ENCODE measurements at regions of chr6 and their contacts with region 1.

Region 1: DNA sequence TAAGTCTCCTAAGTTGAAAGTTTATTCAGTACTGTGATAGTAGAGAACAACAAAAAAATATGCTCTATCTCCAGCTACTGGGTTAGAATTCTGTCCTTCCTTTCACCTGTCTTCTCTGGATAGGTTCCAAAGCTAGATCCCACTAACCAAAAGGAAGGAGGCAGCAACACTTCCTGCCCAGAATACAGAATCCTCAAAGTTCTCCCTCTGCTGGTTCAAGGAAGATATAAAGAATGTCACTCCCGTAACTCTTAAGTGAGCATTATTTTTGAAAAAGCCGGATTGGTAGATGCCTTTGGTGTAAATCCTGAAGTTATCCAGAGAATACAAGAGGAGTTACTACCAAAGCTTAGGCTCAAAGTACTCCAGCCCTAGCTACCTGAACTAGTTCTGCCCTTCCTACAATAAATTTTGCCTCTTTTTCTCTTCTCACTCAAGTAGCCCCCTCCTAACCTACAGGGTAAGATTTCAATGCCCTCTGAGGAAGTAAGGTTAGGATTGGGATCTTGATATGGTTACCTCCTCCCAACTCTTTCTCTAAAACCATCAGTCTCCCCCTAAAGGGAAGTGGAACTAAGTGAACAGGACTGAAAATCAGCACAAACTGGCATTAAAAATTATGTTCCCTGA is 26.0 kb upstream of the CRIP3 start:
- DNase-seq: peak; percentile 72
- H3K4me3 Mint-ChIP-seq: no peak overlapping the region
- H3K27ac Mint-ChIP-seq: no peak overlapping the region
- H3K4me1 Mint-ChIP-seq: no peaks in the 10 kb centered on the region
- H3K27me3 Mint-ChIP-seq: no peaks in the 10 kb centered on the region
- CTCF ChIP-seq: peak; percentile 44

Region 2: DNA sequence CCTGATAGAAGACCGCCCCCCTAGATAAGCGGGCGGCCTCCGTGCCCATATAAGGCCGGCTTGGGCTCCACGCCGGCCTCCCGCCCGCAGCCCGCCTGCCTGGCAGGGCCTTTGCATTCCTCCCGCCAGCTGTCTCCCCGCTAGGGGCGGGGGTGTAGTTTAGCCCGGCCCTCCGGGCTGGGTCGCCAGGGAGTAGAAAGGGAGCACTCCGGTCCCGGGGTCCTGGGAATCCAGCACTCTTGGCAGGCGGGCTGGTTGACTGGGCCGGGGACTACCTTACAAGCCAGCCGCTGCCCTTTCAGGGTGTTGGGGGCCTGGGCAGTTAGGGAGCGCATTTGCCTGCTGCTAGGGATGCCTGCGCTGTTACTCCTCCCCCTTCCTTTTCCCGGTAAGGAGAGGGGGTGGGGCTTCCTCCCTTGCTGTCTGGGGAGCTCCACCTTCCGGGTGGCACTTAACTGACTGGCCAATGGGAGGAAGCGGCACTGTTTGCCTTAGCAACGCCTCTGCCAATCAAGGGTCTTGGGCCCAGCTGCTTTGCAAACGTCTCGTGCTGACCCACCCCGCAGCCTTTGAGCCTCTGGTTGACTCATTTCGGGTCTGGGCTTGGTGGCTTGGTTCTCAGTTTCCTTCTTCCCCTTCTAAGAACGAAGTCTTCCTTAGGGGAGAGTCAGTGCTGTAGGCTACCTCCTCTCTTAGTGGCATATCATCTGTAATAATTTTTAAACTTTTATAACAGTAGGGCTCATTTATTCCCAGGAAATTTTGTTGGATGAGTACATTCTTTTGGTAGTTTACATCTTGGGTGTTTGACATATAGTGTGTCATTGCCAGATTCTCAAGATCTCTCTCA is 160.1 kb before region 1 on chr6:
- CTCF ChIA-PET with region 1: no interaction called
- POLR2A ChIA-PET with region 1: no interaction called
- intact Hi-C with region 1: loop called (anchors 1 kb)
- DNase-seq: peak; percentile 99
- H3K4me3 Mint-ChIP-seq: peak overlapping the region; percentile 87
- H3K27ac Mint-ChIP-seq: peak overlapping the region; percentile 83
- H3K4me1 Mint-ChIP-seq: peaks cover 30% of the 10 kb centered on the region
- H3K27me3 Mint-ChIP-seq: no peaks in the 10 kb centered on the region
- CTCF ChIP-seq: no peak

Region 3: DNA sequence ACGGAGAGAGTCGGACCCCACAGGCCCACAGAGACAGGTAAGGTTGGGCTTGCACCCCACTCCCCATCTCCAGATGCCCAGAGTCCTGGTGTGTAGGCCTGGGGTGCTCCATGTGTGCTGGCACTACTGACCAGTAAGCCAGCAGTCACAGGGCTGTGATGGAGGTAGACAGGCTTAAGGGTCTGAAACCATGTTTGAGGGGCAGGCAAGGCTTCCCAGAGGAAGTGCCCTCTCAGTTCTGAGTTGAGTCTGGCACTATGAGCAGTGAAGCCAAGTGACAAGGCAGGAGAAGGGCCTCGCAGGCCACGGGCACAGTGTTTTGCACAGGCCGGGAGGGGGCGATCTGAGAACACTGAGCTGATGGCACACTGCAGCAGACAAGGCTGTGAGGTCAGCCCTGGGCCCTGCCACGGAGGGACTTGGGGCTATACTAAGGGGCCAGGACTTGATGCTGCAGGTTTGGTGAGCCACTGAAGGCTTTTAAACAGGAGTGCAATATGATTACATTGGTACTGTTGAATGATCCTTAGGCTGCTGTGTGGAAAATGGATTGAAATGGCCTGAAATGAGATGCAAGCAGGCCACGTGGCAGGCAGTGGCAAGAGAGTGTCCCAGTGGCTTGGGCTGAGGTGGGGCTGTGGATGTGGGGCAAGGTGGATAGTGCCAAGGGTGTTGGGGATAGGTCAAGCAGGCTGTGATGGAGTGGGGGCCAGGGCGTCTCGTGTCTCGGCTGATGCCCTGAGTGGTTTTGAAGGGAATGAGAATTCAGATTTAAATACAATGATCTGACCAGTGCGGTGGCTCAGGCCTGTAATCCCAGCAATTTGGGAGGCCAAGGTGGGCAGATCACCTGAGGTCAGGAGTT is 71.0 kb before region 1 on chr6:
- CTCF ChIA-PET with region 1: interaction called, 10 read pairs
- POLR2A ChIA-PET with region 1: no interaction called
- intact Hi-C with region 1: loop called (anchors 1 kb)
- DNase-seq: peak; percentile 77
- H3K4me3 Mint-ChIP-seq: no peak overlapping the region
- H3K27ac Mint-ChIP-seq: no peak overlapping the region
- H3K4me1 Mint-ChIP-seq: peaks cover 4% of the 10 kb centered on the region
- H3K27me3 Mint-ChIP-seq: peaks cover 10% of the 10 kb centered on the region
- CTCF ChIP-seq: peak; percentile 77

Region 4: GRCh38 chr6:43284991-43285781 is 49.4 kb before region 1 on chr6:
- CTCF ChIA-PET with region 1: no interaction called
- POLR2A ChIA-PET with region 1: no interaction called
- intact Hi-C with region 1: no loop called
- DNase-seq: no peak
- H3K4me3 Mint-ChIP-seq: no peak overlapping the region
- H3K27ac Mint-ChIP-seq: no peak overlapping the region
- H3K4me1 Mint-ChIP-seq: no peaks in the 10 kb centered on the region
- H3K27me3 Mint-ChIP-seq: peaks cover 40% of the 10 kb centered on the region
- CTCF ChIP-seq: no peak

Region 5: GRCh38 chr6:43318011-43318410 is 16.6 kb before region 1 on chr6:
- CTCF ChIA-PET with region 1: interaction called, 13 read pairs
- POLR2A ChIA-PET with region 1: interaction called, 4 read pairs
- intact Hi-C with region 1: no loop called
- DNase-seq: no peak
- H3K4me3 Mint-ChIP-seq: no peak overlapping the region
- H3K27ac Mint-ChIP-seq: no peak overlapping the region
- H3K4me1 Mint-ChIP-seq: no peaks in the 10 kb centered on the region
- H3K27me3 Mint-ChIP-seq: no peaks in the 10 kb centered on the region
- CTCF ChIP-seq: no peak

Measured in MCF 10A (cell line).